ENCODE measurements at regions of chr6 and their contacts with region 1.

Region 1: GRCh38 chr6:85354761-85355618 is 94.9 kb upstream of the NT5E start:
- DNase-seq: peak; percentile 57
- ATAC-seq: peak; percentile 94
- H3K4me3 ChIP-seq: no peak overlapping the region
- H3K27ac ChIP-seq: no peak overlapping the region
- H3K4me1 ChIP-seq: peaks cover 0 to 34% of the 10 kb centered on the region in 2 experiments; a peak in 2 of 4 replicates
- H3K27me3 ChIP-seq: no peaks in the 10 kb centered on the region
- CTCF ChIP-seq: peak; percentile 90 to 93 (median 91)
- POLR2A ChIP-seq: no peak
- RAD21 ChIP-seq: peak; percentile 96

Region 2: GRCh38 chr6:84912472-84913322 is 442.3 kb before region 1 on chr6:
- CTCF ChIA-PET with region 1: no interaction called
- POLR2A ChIA-PET with region 1: no interaction called
- RAD21 ChIA-PET with region 1: no interaction called
- intact Hi-C with region 1: no loop called
- DNase-seq: no peak
- ATAC-seq: no peak
- H3K4me3 ChIP-seq: no peak overlapping the region
- H3K27ac ChIP-seq: no peak overlapping the region
- H3K4me1 ChIP-seq: no peaks in the 10 kb centered on the region
- H3K27me3 ChIP-seq: no peaks in the 10 kb centered on the region
- CTCF ChIP-seq: no peak
- POLR2A ChIP-seq: no peak
- RAD21 ChIP-seq: no peak

Region 3: DNA sequence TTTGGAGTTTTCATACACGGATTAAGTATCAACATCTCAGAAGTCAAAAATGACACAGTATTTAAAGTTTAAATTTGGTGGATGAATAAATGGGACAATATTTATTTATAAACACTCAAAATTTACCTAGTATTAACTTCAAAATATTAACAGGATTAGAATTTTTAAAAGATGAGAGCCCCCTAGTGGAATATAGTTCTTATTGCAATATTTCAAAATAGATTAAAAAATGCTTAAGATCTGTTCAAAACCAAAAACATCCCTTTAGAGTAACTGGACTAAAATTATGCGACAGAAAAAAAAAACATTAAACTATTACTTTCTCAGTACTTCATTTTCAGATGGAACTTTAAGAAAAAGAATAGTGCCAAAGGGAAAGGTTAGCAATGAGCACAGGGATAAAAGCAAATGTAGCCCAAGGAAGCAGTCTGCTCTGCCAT is 182.1 kb after region 1 on chr6:
- CTCF ChIA-PET with region 1: interaction called, 27 read pairs
- POLR2A ChIA-PET with region 1: no interaction called
- RAD21 ChIA-PET with region 1: interaction called, 4 to 7 read pairs
- intact Hi-C with region 1: loop called (anchors 1 kb)
- DNase-seq: no peak
- ATAC-seq: no peak
- H3K4me3 ChIP-seq: no peak overlapping the region
- H3K27ac ChIP-seq: no peak overlapping the region
- H3K4me1 ChIP-seq: no peaks in the 10 kb centered on the region
- H3K27me3 ChIP-seq: no peaks in the 10 kb centered on the region
- CTCF ChIP-seq: peak; percentile 27 to 71 (median 48); a peak in 4 of 6 replicates
- POLR2A ChIP-seq: no peak
- RAD21 ChIP-seq: peak; percentile 53

Region 4: GRCh38 chr6:85593438-85594196 is 238.6 kb after region 1 on chr6 and contains the start of gene SNX14:
- CTCF ChIA-PET with region 1: no interaction called
- POLR2A ChIA-PET with region 1: no interaction called
- RAD21 ChIA-PET with region 1: no interaction called
- intact Hi-C with region 1: loop called (anchors 2 kb)
- DNase-seq: peak; percentile 92
- ATAC-seq: peak; percentile 93
- H3K4me3 ChIP-seq: peak within 1 kb of the TSS; percentile 75 to 88
- H3K27ac ChIP-seq: peak within 1 kb of the TSS; percentile 90
- H3K4me1 ChIP-seq: peaks cover 4 to 17% of the 10 kb centered on the region in 2 experiments; a peak in 3 of 4 replicates
- H3K27me3 ChIP-seq: no peaks in the 10 kb centered on the region
- CTCF ChIP-seq: no peak
- POLR2A ChIP-seq: peak; percentile 68
- RAD21 ChIP-seq: no peak
- total RNA-seq, gene SNX14: 84.8 TPM